Astrocyte of the cerebellum (primary cell): ENCODE measurements at regions of chr18 and their contacts with region 1.

Region 1: DNA sequence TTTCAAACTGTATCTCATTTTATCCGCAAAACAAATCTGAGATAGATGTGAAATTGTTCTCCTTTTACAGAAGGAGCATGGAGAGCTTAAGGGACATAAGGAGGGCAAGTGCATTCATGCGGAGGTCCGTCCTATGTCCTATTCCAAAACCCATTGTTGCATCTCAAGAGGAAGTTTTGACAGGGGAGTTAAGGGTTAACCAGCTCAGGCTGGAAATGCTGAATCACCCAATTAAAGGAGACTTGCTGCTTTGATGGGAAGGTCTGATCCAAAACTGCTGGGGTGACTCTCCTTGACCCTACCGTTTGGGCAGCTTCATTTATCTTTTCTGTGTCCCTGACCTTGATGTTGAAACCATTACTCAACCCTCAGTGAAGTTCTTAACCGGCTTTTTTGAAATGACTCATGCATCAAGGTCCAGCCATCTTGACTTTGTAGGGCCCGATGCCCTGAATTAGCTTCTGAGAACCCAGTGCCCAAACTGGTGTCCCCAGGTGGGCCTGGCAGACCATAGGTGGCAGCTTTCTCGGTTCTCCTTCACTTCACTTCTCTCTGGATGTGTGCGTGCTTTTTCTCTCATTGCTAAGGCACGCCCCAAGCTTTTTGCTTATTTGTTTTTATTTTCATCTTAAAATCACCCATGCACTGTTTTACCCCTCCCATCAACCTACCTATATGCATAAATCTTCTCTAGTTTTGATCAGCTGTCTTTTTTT is 15.9 kb upstream of the TXNDC2 start:
- DNase-seq: no peak
- H3K4me3 ChIP-seq: no peak overlapping the region
- CTCF ChIP-seq: no peak

Region 2: DNA sequence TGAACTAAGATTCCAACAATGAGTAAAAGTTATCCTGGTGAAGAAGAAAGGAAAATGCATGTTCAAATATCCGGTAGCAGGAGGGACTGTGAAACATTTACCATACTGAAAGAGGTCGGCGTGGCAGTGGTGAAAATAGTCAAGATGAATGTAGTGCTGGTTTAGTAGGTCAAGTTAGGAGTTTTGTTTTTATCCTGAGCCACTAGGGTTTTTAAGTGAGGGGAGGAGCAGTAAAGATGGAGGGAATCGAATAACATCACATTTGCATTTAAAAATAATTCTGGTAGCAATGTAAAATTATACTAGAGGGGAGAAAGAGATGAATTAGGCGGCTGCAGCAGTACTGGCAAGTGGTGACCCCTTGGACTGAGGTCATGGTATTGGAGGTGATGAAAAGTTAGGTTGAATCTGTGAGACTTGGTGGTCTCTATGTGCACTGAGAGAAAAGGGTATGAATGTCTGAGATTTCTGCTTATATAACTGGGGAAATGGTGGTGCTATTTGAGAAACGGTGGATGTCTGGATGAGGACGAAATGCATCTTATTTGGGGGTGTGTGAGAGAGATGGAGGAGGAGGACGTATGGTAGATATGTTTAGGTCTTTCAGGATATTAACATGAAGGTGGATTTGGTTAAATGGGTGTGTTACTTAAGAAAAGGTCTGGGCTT is 49.8 kb after region 1 on chr18:
- in situ Hi-C with region 1: loop called (anchors 5 kb)
- DNase-seq: no peak
- H3K4me3 ChIP-seq: no peak overlapping the region
- CTCF ChIP-seq: no peak